PC-3 (cell line): ENCODE measurements at regions of chr3 and their contacts with region 1.

Region 1: DNA sequence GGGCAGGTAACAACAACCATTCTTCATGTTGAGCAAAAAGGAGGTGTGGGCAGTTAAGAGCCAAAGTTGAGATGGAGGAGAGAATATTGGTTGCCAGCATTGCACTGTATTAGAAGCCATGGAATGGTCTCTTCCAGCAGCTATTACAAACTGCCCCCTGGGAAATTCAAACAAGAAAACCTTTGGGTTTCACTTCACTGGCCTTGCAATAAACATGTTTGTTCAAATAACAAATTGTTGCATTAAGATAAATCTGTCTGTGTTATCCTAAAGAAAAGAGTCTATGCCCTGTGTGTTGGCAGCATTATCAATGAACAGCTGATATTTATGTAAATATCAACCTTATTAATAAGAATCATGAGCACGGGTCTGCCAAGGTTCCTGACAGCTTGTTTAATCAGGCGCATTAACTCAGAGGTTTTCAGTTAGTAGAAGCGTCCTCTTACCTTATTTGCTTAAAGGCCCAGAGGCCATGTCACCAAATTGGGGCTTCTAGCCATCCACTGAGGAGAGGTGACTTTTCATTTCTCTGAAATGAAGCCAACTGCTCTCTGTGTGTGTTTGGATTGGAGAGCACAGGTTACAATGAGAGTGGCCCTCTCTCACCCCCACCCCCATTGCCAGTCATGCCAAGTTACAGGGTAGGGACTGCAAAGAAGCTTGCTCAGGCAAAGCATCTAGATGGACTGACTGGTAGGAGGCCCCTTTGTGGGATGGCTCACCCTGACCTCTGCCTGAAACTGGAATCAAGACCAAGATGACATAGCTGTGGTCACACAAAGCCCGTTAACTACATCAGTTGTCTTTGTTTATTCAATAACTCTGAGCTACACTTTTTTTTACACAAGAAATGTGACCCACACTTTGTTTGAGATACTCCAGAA is 10.5 kb downstream of the FILIP1L start:
- DNase-seq: peak; percentile 78
- ATAC-seq: peak; percentile 39
- H3K4me3 ChIP-seq: no peak overlapping the region
- H3K27ac ChIP-seq: peak overlapping the region; percentile 88
- H3K4me1 ChIP-seq: peaks cover 69% of the 10 kb centered on the region
- H3K27me3 ChIP-seq: no peaks in the 10 kb centered on the region
- CTCF ChIP-seq: no peak

Region 2: GRCh38 chr3:100047455-100048141 is 56.2 kb before region 1 on chr3:
- CTCF ChIA-PET with region 1: interaction called, 3 read pairs
- POLR2A ChIA-PET with region 1: no interaction called
- intact Hi-C with region 1: loop called (anchors 1 kb)
- DNase-seq: peak; percentile 98
- ATAC-seq: peak; percentile 96
- H3K4me3 ChIP-seq: peak overlapping the region; percentile 39
- H3K27ac ChIP-seq: peak overlapping the region; percentile 86
- H3K4me1 ChIP-seq: peaks cover 48% of the 10 kb centered on the region
- H3K27me3 ChIP-seq: no peaks in the 10 kb centered on the region
- CTCF ChIP-seq: no peak

Region 3: GRCh38 chr3:100076731-100077529 is 26.9 kb before region 1 on chr3:
- CTCF ChIA-PET with region 1: interaction called, 4 read pairs
- POLR2A ChIA-PET with region 1: interaction called, 17 read pairs
- intact Hi-C with region 1: no loop called
- DNase-seq: peak; percentile 6
- ATAC-seq: peak; percentile 92
- H3K4me3 ChIP-seq: no peak overlapping the region
- H3K27ac ChIP-seq: no peak overlapping the region
- H3K4me1 ChIP-seq: peaks cover 23% of the 10 kb centered on the region
- H3K27me3 ChIP-seq: no peaks in the 10 kb centered on the region
- CTCF ChIP-seq: no peak

Region 4: GRCh38 chr3:100125161-100125938 is 21.6 kb after region 1 on chr3:
- CTCF ChIA-PET with region 1: no interaction called
- POLR2A ChIA-PET with region 1: no interaction called
- intact Hi-C with region 1: loop called (anchors 1 kb)
- DNase-seq: peak; percentile 74
- ATAC-seq: peak; percentile 96
- H3K4me3 ChIP-seq: no peak overlapping the region
- H3K27ac ChIP-seq: peak overlapping the region; percentile 3; the same call in 1 of the 2 replicates
- H3K4me1 ChIP-seq: peaks cover 16% of the 10 kb centered on the region
- H3K27me3 ChIP-seq: no peaks in the 10 kb centered on the region
- CTCF ChIP-seq: no peak

Region 5: DNA sequence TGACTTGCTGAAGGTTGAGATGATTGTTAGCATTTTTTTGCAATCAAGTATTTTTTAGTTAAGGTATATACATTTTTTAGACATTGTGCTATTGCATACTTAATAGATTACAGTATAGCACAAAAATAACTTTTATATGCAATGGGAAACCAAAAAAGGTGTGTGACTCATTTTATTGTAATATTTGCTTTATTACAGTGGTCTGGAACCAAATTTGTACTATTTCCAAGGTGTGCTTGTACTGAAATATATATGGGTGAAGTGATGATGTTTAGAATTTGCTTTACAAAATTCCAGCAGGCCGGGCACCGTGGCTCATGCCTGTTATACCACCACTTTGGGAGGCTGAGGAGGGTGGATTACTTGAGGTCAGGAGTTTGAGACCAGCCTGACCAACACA is 127.9 kb after region 1 on chr3:
- CTCF ChIA-PET with region 1: no interaction called
- POLR2A ChIA-PET with region 1: no interaction called
- intact Hi-C with region 1: loop called (anchors 1 kb)
- DNase-seq: peak; percentile 97
- ATAC-seq: peak; percentile 97
- H3K4me3 ChIP-seq: no peak overlapping the region
- H3K27ac ChIP-seq: peak overlapping the region; percentile 69
- H3K4me1 ChIP-seq: peaks cover 16% of the 10 kb centered on the region
- H3K27me3 ChIP-seq: no peaks in the 10 kb centered on the region
- CTCF ChIP-seq: no peak